Psoas muscle (tissue), 8 donors: ENCODE measurements at regions of chr1 and their contacts with region 1.

Region 1: GRCh38 chr1:15617175-15617880 is at the start of gene DDI2:
- DNase-seq: peak; percentile 98
- ATAC-seq: peak; percentile 88 to 95 (median 90)
- H3K4me3 ChIP-seq: peak within 1 kb of the TSS; percentile 83
- H3K27ac ChIP-seq: peak within 1 kb of the TSS; percentile 99
- H3K4me1 ChIP-seq: peaks cover 33% of the 10 kb centered on the region
- H3K27me3 ChIP-seq: no peaks in the 10 kb centered on the region
- CTCF ChIP-seq: no peak
- total RNA-seq, gene DDI2: 23.8 to 80.2 (median 39.5) TPM

Region 2: DNA sequence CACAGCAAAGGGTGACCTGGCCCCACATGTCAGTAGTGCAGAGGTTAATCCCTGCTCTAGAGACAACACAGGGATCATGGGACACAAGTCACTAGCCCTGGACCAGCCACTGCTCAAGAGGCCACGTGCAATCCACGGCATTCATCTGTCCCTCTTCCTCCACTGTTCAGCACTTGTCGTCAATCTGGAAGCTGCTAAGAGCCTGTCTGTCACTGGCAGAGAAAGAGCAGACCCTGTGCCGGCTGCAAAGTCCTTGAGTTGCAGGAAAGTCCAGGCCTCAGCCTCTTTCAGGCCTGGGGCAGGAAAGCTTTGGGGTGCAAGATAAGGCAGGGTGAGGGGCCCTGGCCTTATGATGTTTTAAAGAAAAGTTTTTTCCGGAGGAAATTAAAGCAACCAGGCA is 124.7 kb before region 1 on chr1:
- intact Hi-C with region 1: no loop called
- DNase-seq: no peak
- ATAC-seq: no peak
- H3K4me3 ChIP-seq: no peak overlapping the region
- H3K27ac ChIP-seq: no peak overlapping the region
- H3K4me1 ChIP-seq: no peaks in the 10 kb centered on the region
- H3K27me3 ChIP-seq: no peaks in the 10 kb centered on the region
- CTCF ChIP-seq: no peak

Region 3: DNA sequence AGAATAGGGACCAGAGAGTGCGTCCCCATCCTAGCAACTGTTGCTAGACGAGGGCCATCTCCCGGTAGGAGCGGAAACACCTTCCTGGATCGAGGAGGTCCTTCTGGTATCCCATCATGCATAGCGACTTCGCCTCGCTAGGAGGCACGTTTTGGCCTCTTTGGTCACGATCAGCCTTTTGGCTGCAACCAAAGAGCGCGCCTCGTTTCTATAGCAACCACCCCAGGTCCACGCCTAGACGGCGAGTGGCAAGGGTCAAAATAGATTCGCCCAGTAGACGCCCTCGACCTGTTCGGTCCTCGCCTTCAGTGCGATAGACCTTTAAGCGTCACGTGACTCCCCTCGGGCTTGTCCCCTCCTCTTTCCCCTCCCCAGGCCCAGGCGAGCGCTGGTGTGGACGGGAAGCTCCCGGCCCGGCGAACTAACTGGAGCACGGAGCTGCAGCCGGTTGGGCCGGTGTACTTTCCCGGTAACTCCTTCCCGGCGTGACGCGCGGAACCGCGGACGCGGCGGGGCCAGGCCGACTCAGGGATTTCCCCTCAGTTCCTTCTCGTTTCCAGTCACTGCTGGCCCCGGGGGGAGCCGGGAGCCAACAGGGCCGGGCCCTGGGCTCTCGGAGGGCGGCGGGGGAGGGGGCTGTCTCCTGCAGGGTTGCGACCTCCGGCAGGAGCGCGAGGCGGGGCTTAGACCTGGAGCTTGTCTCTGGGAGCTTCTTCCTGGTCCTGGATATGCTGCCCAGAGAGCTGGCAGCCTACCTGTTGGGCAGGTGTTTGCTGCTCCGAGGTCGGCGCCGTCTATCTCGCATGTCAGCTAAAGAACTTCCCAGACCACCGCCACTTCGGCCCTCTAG is 90.6 kb before region 1 on chr1 and contains the start of gene DNAJC16:
- intact Hi-C with region 1: loop called (anchors 5 to 10 kb)
- DNase-seq: peak; percentile 98 to 99
- ATAC-seq: peak; percentile 72 to 73 (median 72)
- H3K4me3 ChIP-seq: peak within 1 kb of the TSS; percentile 87
- H3K27ac ChIP-seq: peak within 1 kb of the TSS; percentile 90
- H3K4me1 ChIP-seq: peaks cover 26% of the 10 kb centered on the region
- H3K27me3 ChIP-seq: no peaks in the 10 kb centered on the region
- CTCF ChIP-seq: peak; percentile 31
- total RNA-seq, gene DNAJC16: 17.2 to 29.9 (median 22.7) TPM

Region 4: DNA sequence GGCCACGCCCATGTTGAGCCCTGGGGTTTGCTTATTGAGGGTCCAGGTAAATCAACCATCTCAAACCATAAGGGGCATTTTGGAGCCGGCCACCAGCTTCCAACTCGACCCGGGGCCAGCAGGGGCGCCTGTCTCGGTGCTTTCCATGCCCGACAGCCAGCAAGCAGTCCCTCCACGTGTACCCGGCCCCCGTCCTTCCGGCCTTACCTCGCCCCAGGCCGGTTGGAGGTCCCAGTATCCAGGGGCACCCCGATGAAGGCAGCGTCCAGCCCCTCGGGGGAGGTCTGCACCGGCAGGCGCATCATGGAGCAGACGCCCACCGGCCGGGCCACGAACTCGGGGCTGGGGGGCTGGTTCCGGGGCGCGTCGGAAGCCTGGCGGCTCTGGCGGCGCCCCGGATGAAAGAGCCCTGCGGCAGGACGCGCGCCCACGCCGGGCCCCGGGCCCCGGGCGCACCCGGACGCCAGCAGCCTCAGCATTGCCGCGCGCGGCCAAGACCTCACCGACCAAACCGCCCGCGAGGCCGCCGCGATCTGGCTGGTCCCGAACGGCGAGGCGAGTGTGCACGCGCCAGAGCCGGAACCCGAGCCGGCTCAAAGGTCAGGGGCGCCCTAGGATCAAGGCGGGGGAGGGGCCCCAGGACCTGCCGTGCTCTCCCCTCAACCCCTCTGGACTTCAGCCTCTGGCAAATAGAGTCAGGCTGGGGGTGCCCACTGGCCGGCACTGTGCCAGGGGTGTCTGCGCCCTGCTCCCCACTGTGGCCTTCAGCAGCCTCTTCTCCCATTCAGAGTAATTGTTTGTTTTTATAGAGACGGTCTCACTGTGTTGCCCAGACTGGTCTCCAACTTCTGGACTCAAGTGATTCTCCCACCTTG is 32.6 kb before region 1 on chr1 and contains the start of gene AGMAT:
- intact Hi-C with region 1: loop called in 1 of 2 experiments (anchors 5 kb)
- DNase-seq: peak; percentile 50 to 63
- ATAC-seq: peak; percentile 43 to 53 (median 46)
- H3K4me3 ChIP-seq: peak within 1 kb of the TSS; percentile 62
- H3K27ac ChIP-seq: peak within 1 kb of the TSS; percentile 95
- H3K4me1 ChIP-seq: peaks cover 42% of the 10 kb centered on the region
- H3K27me3 ChIP-seq: no peaks in the 10 kb centered on the region
- CTCF ChIP-seq: peak; percentile 29
- total RNA-seq, gene AGMAT: 2.6 to 12.6 (median 3.4) TPM

Region 5: DNA sequence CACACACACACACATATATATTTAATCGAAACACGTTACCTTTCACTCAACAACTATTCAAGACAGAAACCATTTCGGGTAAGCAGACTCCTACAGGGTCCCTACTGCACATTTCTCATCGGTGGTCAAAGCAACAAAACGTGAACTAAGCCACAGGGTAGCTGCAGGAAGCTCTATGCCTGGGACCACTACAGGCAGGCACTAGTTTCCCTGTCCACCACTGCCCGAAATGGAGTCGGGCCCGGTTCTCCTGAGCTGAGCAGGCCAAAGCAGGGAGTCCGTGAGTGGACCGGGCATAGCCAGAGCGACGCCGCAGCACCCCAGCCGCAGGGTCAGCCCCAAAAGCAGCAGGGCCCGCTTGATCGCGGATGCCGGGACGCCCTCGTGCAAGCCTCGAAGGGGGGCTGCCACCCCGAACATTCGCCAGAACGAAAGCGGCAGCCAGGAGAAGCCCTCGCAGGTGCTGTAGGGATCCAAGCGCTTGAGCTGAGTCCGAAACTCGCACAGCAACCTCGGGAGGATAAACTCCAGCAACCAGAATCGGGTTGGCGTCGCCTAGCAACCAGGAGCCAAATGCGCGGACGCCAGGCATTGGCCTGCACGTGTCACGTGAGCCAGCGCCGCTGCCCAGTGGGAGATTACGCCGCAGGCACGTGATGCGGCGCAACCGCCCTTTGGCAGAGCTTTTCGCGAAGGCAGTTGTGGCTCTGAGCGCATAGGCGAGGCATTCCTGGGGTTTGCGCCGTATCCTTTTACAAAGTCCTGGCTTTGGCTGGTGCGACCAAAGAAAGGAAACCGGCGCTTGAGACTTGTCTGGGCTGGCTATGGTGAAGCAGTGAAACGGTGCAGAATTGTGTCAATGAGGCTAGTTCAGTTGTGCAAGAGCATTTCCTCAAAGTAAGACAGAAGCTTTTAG is 14.0 kb before region 1 on chr1:
- intact Hi-C with region 1: loop called in 1 of 2 experiments (anchors 1 kb)
- DNase-seq: peak; percentile 98 to 99
- ATAC-seq: peak; percentile 94 to 99 (median 98)
- H3K4me3 ChIP-seq: peak overlapping the region; percentile 86
- H3K27ac ChIP-seq: peak overlapping the region; percentile 89
- H3K4me1 ChIP-seq: peaks cover 4% of the 10 kb centered on the region
- H3K27me3 ChIP-seq: no peaks in the 10 kb centered on the region
- CTCF ChIP-seq: no peak

Region 6: GRCh38 chr1:15788624-15789301 is 171.4 kb after region 1 on chr1:
- intact Hi-C with region 1: no loop called
- DNase-seq: no peak
- ATAC-seq: no peak
- H3K4me3 ChIP-seq: no peak overlapping the region
- H3K27ac ChIP-seq: no peak overlapping the region
- H3K4me1 ChIP-seq: peaks cover 6% of the 10 kb centered on the region
- H3K27me3 ChIP-seq: no peaks in the 10 kb centered on the region
- CTCF ChIP-seq: no peak

Region 7: DNA sequence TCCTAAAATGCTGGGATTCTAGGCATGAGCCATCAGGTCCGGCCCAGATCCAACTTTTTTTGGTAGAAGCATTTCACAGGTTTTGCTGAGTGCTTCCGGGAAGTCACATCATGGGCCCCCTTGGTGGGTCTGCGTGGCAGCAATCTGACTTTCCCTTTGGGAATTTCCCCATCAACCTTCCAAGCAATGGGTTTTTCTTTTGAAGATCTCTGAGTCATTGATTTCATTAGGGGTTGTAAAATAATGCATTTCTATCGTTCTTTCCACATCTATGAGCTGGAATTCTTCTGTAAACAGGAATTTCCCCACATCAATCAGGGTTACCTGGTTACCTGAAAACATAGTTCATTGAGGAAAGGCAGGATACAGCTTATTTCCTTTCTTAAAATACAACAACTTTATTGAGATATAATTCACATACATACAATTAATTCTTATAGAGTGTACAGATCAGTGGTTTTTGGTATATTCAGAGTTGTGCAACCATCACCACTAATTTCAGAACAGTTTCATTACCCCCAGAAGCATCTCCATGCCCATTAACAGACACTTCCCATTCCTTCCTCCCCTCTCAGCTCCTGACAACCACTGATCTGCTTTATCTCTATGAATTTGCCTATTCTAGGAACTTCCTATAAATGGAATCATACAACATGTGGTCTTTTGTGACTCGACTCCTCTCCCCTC is 368.4 kb after region 1 on chr1:
- intact Hi-C with region 1: no loop called
- DNase-seq: no peak
- ATAC-seq: no peak
- H3K4me3 ChIP-seq: no peak overlapping the region
- H3K27ac ChIP-seq: no peak overlapping the region
- H3K4me1 ChIP-seq: no peaks in the 10 kb centered on the region
- H3K27me3 ChIP-seq: no peaks in the 10 kb centered on the region
- CTCF ChIP-seq: no peak